Psoas muscle (tissue), 8 donors: ENCODE measurements at regions of chr4 and their contacts with region 1.

Region 1: DNA sequence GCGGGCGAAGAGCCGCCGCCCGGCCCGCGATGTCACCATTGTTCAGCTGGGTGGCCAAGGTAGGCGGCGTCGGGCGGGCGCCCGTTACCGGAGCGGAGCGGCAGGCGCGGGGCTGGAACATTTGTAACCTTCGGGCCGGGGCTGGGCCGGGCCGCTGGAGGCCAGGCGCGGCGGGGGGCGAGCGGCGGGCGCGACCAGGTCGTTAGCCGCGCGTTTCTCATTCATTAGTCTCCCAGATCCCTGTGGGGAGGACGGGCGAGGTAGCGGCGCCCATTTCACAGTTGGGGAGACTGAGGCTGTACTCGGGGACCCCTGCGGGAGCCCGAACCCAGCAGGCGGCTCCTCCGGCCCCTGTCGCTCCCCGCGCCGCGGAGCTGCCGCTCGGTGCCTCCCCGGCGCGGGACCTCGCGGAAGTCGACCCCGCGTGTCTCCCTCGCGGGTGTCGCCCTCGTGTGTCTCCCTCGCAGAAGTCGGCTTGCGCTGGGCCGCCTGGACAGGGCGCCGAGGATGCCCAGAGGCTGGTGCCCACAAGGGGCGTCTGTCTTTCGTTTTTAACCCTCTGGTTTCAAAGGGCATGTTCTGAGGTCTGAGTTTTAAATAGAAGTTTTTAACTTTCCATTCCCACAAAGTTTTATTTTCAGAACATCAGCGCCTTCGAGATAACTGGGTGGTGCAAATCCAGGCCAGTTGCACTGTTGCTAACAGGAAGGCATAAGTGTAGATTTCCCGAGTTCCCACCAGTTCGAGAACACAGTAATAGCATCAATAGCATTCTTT is 17.5 kb downstream of the PTTG2 start:
- DNase-seq: peak; percentile 72 to 89
- ATAC-seq: peak; percentile 82 to 93 (median 92)
- H3K4me3 ChIP-seq: peak overlapping the region; percentile 91
- H3K27ac ChIP-seq: peak overlapping the region; percentile 87
- H3K4me1 ChIP-seq: peaks cover 7% of the 10 kb centered on the region
- H3K27me3 ChIP-seq: no peaks in the 10 kb centered on the region
- CTCF ChIP-seq: peak; percentile 70

Region 2: GRCh38 chr4:37802068-37802666 is 175.5 kb before region 1 on chr4:
- intact Hi-C with region 1: loop called (anchors 2 to 5 kb)
- DNase-seq: peak in 1 of 2 donors; percentile 25
- ATAC-seq: peak; percentile 80 to 92 (median 88)
- H3K4me3 ChIP-seq: no peak overlapping the region
- H3K27ac ChIP-seq: no peak overlapping the region
- H3K4me1 ChIP-seq: no peaks in the 10 kb centered on the region
- H3K27me3 ChIP-seq: no peaks in the 10 kb centered on the region
- CTCF ChIP-seq: peak; percentile 60

Region 3: GRCh38 chr4:37826295-37827029 is 151.2 kb before region 1 on chr4 and contains the start of gene PGM2:
- intact Hi-C with region 1: loop called in 1 of 2 experiments (anchors 5 kb)
- DNase-seq: peak; percentile 86 to 91
- ATAC-seq: peak; percentile 91 to 98 (median 94)
- H3K4me3 ChIP-seq: peak within 1 kb of the TSS; percentile 93
- H3K27ac ChIP-seq: peak within 1 kb of the TSS; percentile 78
- H3K4me1 ChIP-seq: peaks cover 12% of the 10 kb centered on the region
- H3K27me3 ChIP-seq: no peaks in the 10 kb centered on the region
- CTCF ChIP-seq: no peak
- total RNA-seq, gene PGM2: 2.5 to 4.7 (median 4.0) TPM

Region 4: GRCh38 chr4:37936889-37937498 is 40.7 kb before region 1 on chr4:
- intact Hi-C with region 1: loop called in 1 of 2 experiments (anchors 5 kb)
- DNase-seq: peak; percentile 56 to 91
- ATAC-seq: peak; percentile 87 to 94 (median 90)
- H3K4me3 ChIP-seq: peak overlapping the region; percentile 61
- H3K27ac ChIP-seq: peak overlapping the region; percentile 88
- H3K4me1 ChIP-seq: peaks cover 47% of the 10 kb centered on the region
- H3K27me3 ChIP-seq: no peaks in the 10 kb centered on the region
- CTCF ChIP-seq: no peak

Region 5: GRCh38 chr4:38266616-38267015 is 289.0 kb after region 1 on chr4:
- intact Hi-C with region 1: no loop called
- DNase-seq: no peak
- ATAC-seq: peak; percentile 84 to 98 (median 92)
- H3K4me3 ChIP-seq: no peak overlapping the region
- H3K27ac ChIP-seq: peak overlapping the region; percentile 64
- H3K4me1 ChIP-seq: peaks cover 4% of the 10 kb centered on the region
- H3K27me3 ChIP-seq: no peaks in the 10 kb centered on the region
- CTCF ChIP-seq: no peak